ENCODE measurements at regions of chr1 and their contacts with region 1.

Region 1: GRCh38 chr1:170967042-170967910 is 31.9 kb downstream of the MROH9 start:
- DNase-seq: peak; percentile 63
- ATAC-seq: peak; percentile 94
- H3K4me3 ChIP-seq: no peak overlapping the region
- H3K27ac ChIP-seq: no peak overlapping the region
- H3K4me1 ChIP-seq: no peaks in the 10 kb centered on the region
- H3K27me3 ChIP-seq: no peaks in the 10 kb centered on the region
- CTCF ChIP-seq: peak; percentile 68
- POLR2A ChIP-seq: no peak
- RAD21 ChIP-seq: peak; percentile 60

Region 2: GRCh38 chr1:171188388-171189266 is 221.4 kb after region 1 on chr1:
- CTCF ChIA-PET with region 1: interaction called, 6 read pairs
- POLR2A ChIA-PET with region 1: no interaction called
- dilution Hi-C with region 1: no loop called
- in situ Hi-C with region 1: no loop called
- intact Hi-C with region 1: loop called (anchors 1 kb)
- DNase-seq: peak; percentile 65
- ATAC-seq: peak; percentile 80
- H3K4me3 ChIP-seq: no peak overlapping the region
- H3K27ac ChIP-seq: peak overlapping the region; percentile 17; the same call in 1 of the 2 replicates
- H3K4me1 ChIP-seq: peaks cover 2% of the 10 kb centered on the region; the same call in 1 of the 2 replicates
- H3K27me3 ChIP-seq: no peaks in the 10 kb centered on the region
- CTCF ChIP-seq: peak; percentile 73
- POLR2A ChIP-seq: no peak
- RAD21 ChIP-seq: peak; percentile 64

Region 3: GRCh38 chr1:171226747-171227370 is 259.6 kb after region 1 on chr1:
- CTCF ChIA-PET with region 1: interaction called, 25 read pairs
- POLR2A ChIA-PET with region 1: no interaction called
- dilution Hi-C with region 1: no loop called
- in situ Hi-C with region 1: loop called (anchors 10 kb)
- intact Hi-C with region 1: loop called (anchors 1 kb)
- DNase-seq: peak; percentile 80
- ATAC-seq: peak; percentile 93
- H3K4me3 ChIP-seq: no peak overlapping the region
- H3K27ac ChIP-seq: no peak overlapping the region
- H3K4me1 ChIP-seq: peaks cover 2% of the 10 kb centered on the region
- H3K27me3 ChIP-seq: no peaks in the 10 kb centered on the region
- CTCF ChIP-seq: peak; percentile 95
- POLR2A ChIP-seq: no peak
- RAD21 ChIP-seq: peak; percentile 99

Measured in IMR-90 (cell line).